Transverse colon (tissue), 4 donors: ENCODE measurements at regions of chr3 and their contacts with region 1.

Region 1: DNA sequence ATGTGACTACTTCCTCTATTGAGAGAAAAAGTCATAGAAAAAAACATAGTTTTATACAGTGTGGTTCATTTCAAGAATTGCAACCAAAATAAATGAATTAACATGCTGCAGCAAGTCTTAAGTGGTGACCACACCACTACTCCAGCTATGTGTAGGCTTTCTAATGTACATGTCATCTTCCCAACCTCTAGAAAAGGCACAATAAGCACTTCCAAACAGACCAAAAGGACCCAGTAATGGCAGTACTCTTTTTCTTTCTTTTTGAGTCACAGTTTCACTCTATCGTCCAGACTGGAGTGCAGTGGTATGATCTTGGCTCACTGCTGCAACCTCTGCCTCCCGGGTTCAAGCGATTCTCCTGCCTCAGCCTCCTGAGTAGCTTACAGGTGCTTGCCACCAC is 219.3 kb upstream of the KBTBD8 start:
- DNase-seq: no peak
- H3K4me3 ChIP-seq: no peak overlapping the region
- H3K27ac ChIP-seq: no peak overlapping the region
- H3K4me1 ChIP-seq: no peaks in the 10 kb centered on the region
- H3K27me3 ChIP-seq: no peaks in the 10 kb centered on the region
- CTCF ChIP-seq: no peak
- EP300 ChIP-seq: no peak
- POLR2A ChIP-seq: no peak

Region 2: DNA sequence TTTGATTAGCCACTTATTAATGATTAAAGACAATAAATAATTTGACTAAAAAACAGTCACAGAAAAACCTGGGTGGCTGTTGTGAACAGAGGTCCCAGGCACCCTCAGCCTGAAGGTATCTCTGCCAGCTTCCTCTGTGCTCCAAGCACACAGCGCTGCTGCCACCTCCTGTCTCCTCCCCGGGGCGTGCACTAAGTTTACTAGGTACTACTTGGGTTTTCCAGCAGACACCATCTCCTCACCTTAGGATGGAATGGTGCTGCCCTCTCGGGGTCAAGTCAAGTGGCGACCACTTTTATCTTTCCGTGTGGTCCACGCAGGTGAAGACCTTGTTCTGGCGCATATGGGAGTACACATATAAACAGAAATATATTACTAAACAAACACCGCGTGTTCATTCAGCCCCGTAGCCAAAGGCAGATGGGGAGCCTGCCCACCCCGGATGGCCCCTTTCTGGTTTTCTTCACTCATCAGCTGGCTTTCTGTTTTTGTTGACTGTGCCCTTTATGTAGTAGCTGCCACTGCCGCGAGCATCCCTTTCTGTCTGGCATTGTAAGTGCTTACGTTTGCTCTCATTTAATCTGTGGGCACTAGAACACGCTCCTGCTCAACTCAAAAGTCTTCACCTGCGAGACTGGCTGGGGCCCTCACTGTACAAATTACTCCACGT is 406.0 kb before region 1 on chr3:
- in situ Hi-C with region 1: no loop called
- intact Hi-C with region 1: no loop called
- DNase-seq: peak; percentile 50
- H3K4me3 ChIP-seq: no peak overlapping the region
- H3K27ac ChIP-seq: no peak overlapping the region
- H3K4me1 ChIP-seq: peaks cover 5 to 18% (median 16%) of the 10 kb centered on the region in 4 donors
- H3K27me3 ChIP-seq: no peaks in the 10 kb centered on the region
- CTCF ChIP-seq: peak; percentile 15 to 38 (median 26)
- EP300 ChIP-seq: no peak
- POLR2A ChIP-seq: no peak

Region 3: GRCh38 chr3:67599821-67600220 is 821.0 kb after region 1 on chr3:
- in situ Hi-C with region 1: no loop called
- intact Hi-C with region 1: loop called (anchors 5 kb)
- DNase-seq: no peak
- H3K4me3 ChIP-seq: no peak overlapping the region
- H3K27ac ChIP-seq: no peak overlapping the region
- H3K4me1 ChIP-seq: no peaks in the 10 kb centered on the region
- H3K27me3 ChIP-seq: no peaks in the 10 kb centered on the region
- CTCF ChIP-seq: no peak
- EP300 ChIP-seq: no peak
- POLR2A ChIP-seq: no peak